PC-9 (cell line): ENCODE measurements at regions of chr1 and their contacts with region 1.

Region 1: GRCh38 chr1:10032590-10033358 is at the start of gene UBE4B:
- DNase-seq: peak; percentile 84 to 99
- H3K4me3 ChIP-seq: peak within 1 kb of the TSS; percentile 82
- H3K27ac ChIP-seq: peak within 1 kb of the TSS; percentile 83
- H3K4me1 ChIP-seq: no peaks in the 10 kb centered on the region; the same call in 1 of the 2 replicates
- H3K27me3 ChIP-seq: no peaks in the 10 kb centered on the region
- CTCF ChIP-seq: peak; percentile 69
- total RNA-seq, gene UBE4B: 54.3 and 59.1 TPM in 2 replicates

Region 2: GRCh38 chr1:9823943-9824701 is 208.7 kb before region 1 on chr1 and contains the start of gene CLSTN1:
- CTCF ChIA-PET with region 1: no interaction called
- POLR2A ChIA-PET with region 1: no interaction called
- intact Hi-C with region 1: loop called (anchors 5 kb)
- DNase-seq: peak; percentile 43 to 83
- H3K4me3 ChIP-seq: peak within 1 kb of the TSS; percentile 95
- H3K27ac ChIP-seq: peak within 1 kb of the TSS; percentile 61
- H3K4me1 ChIP-seq: peaks cover 36% of the 10 kb centered on the region
- H3K27me3 ChIP-seq: no peaks in the 10 kb centered on the region
- CTCF ChIP-seq: no peak
- total RNA-seq, gene CLSTN1: 138 and 140 TPM in 2 replicates

Region 3: DNA sequence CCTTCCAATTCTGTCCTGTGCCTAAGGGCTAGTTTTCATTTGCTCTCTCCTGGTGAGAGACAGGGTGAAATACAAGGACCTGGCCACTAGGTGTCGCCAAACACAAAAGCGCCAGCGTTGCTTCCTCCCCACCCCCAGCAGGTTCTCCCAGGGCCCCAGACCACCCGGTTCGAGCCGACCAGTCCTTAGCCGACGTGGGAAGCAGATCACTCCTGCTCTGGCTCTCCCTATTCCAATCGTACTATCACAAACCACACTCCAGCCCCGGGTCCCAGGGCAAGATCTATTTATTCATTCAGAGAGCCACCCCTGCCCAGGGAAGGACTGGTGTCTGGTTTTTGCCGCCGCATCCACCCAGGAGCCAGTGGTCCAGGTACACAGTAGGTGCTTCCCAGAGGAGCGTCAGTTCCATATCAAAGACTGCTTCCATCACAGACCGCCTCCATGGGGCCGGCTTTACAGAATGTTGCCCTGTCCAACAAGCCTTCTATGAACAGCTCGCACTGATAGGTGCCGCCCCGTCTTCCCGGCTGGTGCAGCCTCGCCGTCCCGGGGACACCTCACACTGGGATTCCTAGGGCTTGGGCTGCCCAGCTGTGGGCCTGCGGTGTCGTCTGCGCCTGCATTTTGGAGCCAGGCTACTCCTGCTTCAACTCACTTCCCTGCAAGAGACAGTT is 157.7 kb before region 1 on chr1:
- CTCF ChIA-PET with region 1: interaction called, 3 read pairs
- POLR2A ChIA-PET with region 1: no interaction called
- intact Hi-C with region 1: loop called (anchors 1 kb)
- DNase-seq: peak; percentile 43 to 65
- H3K4me3 ChIP-seq: no peak overlapping the region
- H3K27ac ChIP-seq: no peak overlapping the region
- H3K4me1 ChIP-seq: peaks cover 14% of the 10 kb centered on the region
- H3K27me3 ChIP-seq: no peaks in the 10 kb centered on the region
- CTCF ChIP-seq: peak; percentile 90

Region 4: GRCh38 chr1:9890224-9890731 is 142.5 kb before region 1 on chr1:
- CTCF ChIA-PET with region 1: interaction called, 6 read pairs
- POLR2A ChIA-PET with region 1: no interaction called
- intact Hi-C with region 1: loop called (anchors 5 kb)
- DNase-seq: peak; percentile 69 to 89
- H3K4me3 ChIP-seq: no peak overlapping the region
- H3K27ac ChIP-seq: peak overlapping the region; percentile 100
- H3K4me1 ChIP-seq: peaks cover 59% of the 10 kb centered on the region
- H3K27me3 ChIP-seq: no peaks in the 10 kb centered on the region
- CTCF ChIP-seq: no peak

Region 5: DNA sequence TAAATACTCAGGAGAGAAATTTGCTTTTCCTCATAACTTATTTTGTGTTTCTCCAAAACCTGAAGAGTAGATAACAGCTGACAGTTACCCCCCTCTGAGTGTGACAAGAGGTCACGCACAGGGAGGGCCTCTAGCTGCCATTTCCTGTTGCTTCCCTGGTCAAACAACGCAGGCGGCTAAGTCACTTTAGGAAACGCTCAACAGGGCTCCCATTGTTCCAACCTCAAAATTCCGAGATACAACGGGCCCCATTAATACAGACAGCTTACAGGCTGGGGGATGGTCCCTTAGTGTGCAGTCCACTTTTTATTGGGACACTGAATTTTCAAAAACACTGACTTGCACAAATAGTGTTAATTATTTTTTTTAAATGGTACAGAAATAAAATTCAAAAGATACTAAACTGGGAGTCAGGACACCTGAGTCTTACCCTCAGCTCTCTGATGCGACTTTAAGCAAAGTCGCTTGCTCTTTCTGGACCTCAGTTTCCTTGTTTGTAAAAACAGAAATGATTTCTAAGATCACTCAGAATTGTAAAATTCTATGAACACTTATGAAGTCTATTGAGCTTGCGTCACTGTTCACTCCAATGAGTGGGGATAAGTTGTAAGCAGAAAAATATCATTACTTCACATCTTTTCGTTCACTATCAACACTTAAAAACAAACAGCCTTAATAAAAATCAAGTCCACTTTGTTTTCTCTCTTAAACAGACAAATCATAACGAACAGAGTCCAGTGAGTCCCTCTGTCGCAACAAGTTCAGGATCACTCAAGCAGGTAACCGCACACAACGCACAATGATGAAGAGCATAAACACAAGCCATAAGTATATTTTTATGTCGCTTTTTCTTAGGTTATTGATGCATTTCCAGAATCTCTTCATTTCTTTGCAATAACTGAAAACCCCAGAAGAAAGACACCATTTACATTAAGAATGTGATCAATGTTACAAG is 103.1 kb before region 1 on chr1:
- CTCF ChIA-PET with region 1: interaction called, 10 read pairs
- POLR2A ChIA-PET with region 1: no interaction called
- intact Hi-C with region 1: no loop called
- DNase-seq: no peak
- H3K4me3 ChIP-seq: no peak overlapping the region
- H3K27ac ChIP-seq: no peak overlapping the region
- H3K4me1 ChIP-seq: no peaks in the 10 kb centered on the region
- H3K27me3 ChIP-seq: no peaks in the 10 kb centered on the region
- CTCF ChIP-seq: no peak

Region 6: DNA sequence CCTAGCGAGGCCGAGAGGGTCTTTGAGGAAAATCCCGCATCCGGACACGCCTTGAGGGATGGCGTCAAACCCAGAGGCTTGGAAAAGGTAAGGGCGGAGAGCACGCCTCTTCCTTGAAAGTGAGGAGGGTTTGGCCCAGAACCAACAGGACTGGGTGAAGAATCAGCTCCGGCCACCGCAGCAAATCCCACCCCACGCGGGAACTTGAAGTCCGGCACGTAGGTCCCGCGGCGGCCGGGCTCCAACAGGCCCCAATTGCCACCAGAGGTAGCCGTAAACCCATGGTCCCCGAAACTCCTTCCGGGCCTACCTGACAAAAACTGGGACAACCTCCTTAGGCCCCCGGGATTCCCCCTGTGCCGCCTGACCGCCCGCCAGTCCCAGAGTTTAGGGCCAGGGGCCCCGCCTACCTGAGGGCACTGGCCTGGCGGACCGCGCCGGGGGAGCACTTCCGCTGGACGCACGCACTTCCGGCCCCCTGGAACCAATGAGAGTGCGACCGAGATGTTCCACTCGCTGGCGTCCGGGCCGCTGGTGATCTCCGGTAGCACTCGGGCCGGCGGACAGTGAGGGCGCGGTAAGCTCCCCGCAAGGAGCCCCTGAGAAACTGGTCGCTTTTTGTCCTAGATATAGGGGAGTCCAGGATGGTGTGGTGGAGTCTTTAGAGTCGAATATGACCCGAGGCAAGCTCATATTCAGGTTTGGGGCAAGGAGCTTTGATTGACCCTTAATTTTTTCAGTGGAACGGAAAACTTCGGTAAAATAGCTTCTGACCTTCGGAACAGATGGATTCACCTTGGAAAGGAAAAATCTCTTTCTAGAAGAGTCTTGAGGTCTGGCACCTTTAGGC is 89.6 kb before region 1 on chr1 and contains the starts of genes LZIC and NMNAT1:
- CTCF ChIA-PET with region 1: no interaction called
- POLR2A ChIA-PET with region 1: interaction called, 3 read pairs
- intact Hi-C with region 1: loop called (anchors 1 kb)
- DNase-seq: peak; percentile 78 to 91
- H3K4me3 ChIP-seq: peak within 1 kb of the TSS; percentile 86
- H3K27ac ChIP-seq: peak within 1 kb of the TSS; percentile 88
- H3K4me1 ChIP-seq: peaks cover 6% of the 10 kb centered on the region
- H3K27me3 ChIP-seq: no peaks in the 10 kb centered on the region
- CTCF ChIP-seq: no peak
- total RNA-seq, gene LZIC: 27.4 and 33.5 TPM in 2 replicates
- total RNA-seq, gene NMNAT1: 10.1 and 13.4 TPM in 2 replicates

Region 7: GRCh38 chr1:10209905-10210810 is 177.4 kb after region 1 on chr1 and contains the start of gene KIF1B:
- CTCF ChIA-PET with region 1: no interaction called
- POLR2A ChIA-PET with region 1: no interaction called
- intact Hi-C with region 1: loop called (anchors 2 kb)
- DNase-seq: peak; percentile 80 to 98
- H3K4me3 ChIP-seq: peak within 1 kb of the TSS; percentile 88
- H3K27ac ChIP-seq: peak within 1 kb of the TSS; percentile 45
- H3K4me1 ChIP-seq: peaks cover 11% of the 10 kb centered on the region
- H3K27me3 ChIP-seq: no peaks in the 10 kb centered on the region
- CTCF ChIP-seq: peak; percentile 88
- total RNA-seq, gene KIF1B: 20.6 and 22.7 TPM in 2 replicates

Region 8: DNA sequence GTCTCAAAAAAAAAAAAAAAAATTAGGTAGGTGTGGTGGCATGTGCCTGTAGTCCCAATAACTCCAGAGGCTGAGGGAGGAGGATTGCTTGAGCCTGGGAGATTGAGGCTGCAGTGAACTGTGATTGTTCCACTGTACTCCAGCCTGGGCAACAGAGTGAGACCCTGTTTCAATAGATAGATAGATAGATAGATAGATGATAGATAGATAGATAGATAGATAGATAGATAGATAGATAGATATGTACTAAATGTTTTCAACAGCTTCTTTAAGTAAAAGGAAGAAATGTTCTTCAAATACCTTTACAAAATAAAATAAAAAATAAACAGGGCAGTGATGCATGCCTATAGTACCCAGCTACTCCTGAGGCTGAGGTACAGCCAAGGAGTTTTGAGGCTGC is 187.4 kb after region 1 on chr1:
- CTCF ChIA-PET with region 1: no interaction called
- POLR2A ChIA-PET with region 1: no interaction called
- intact Hi-C with region 1: no loop called
- DNase-seq: no peak
- H3K4me3 ChIP-seq: no peak overlapping the region
- H3K27ac ChIP-seq: no peak overlapping the region
- H3K4me1 ChIP-seq: no peaks in the 10 kb centered on the region
- H3K27me3 ChIP-seq: no peaks in the 10 kb centered on the region
- CTCF ChIP-seq: no peak